H1 (cell line): ENCODE measurements at regions of chr12 and their contacts with region 1.

Region 1: DNA sequence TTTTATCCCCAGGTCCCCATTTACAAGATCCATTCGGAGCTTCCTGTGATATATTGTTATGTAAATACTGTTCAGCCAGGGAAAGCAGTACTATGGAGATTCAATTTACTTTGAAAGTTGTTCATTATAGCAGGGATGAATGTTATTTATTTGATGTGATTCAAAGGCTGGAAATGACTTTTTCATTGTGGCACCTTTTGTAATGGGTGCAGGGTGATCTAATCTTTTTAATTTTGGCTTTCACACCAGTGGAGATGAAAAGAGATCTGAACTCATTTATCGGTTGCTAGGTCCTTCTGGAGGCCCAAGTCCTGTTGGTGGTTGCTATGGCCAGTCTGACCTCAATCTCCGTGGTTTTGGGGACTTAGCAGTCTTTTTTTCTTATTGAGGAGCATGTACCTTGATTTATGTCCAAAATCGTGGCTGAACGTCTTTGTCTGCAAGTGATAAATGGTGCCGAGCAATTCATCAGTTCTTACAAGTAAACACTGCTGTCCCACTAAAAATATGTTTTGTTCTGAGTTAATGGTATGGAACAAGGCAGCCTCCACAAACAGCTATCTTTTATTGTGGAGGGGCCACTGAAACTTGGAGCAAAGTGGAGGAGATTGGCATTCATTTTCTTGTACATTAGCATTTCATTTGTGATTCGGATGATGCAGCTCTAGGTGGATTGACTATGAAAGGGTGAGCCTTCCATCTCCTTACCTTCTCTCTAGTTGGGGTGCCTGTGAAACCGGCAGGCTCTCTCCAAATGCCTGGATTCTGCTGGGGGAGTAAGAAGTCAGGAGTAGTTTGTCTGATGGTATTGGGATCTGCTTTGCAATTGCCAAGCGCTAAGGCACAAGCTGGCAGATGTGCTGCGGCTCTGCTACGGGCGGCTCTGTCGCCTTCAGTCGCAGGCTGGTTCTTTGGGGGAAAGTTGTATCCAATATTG is 2.0 kb downstream of the RMST start:
- DNase-seq: peak; percentile 68 to 71
- H3K4me3 ChIP-seq: peak overlapping the region; percentile 48 to 94 (median 73)
- H3K27ac ChIP-seq: peak overlapping the region; percentile 83; the same call in 1 of the 2 replicates
- H3K4me1 ChIP-seq: peaks cover 0 to 12% (median 8%) of the 10 kb centered on the region in 4 experiments; a peak in 6 of 7 replicates
- H3K27me3 ChIP-seq: peaks cover 0 to 4% (median 0%) of the 10 kb centered on the region in 4 experiments; a peak in 1 of 7 replicates
- CTCF ChIP-seq: no peak
- EP300 ChIP-seq: 0 out of 3 replicates have a peak, but pooled peaks of 1 of the 2 experiments have one; percentile 44
- POLR2A ChIP-seq: peak; percentile 82 to 98
- RAD21 ChIP-seq: peak; percentile 8 to 28; a peak in 1 of 4 replicates

Region 2: DNA sequence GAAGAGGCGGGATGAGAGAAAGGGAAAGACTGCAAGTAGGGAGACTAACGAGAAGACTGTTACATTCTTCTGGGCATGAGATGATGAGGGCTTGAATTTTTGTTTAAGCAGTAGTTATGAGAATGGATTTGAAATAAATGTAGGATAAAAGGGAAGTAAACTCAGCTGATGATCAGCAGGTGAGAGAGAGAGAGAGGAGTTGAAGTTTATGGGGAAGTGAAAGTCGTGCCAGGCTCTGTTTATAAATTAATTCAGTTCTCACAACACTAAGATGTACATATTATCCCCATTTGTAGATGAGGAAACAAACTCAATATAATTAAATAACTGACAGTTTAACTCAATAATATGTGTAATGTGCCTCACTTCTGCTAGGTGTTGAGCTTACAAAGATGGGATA is 172.1 kb before region 1 on chr12:
- CTCF ChIA-PET with region 1: no interaction called
- POLR2A ChIA-PET with region 1: no interaction called
- DNase-seq: no peak
- H3K4me3 ChIP-seq: no peak overlapping the region
- H3K27ac ChIP-seq: no peak overlapping the region
- H3K4me1 ChIP-seq: peaks cover 0 to 2% (median 0%) of the 10 kb centered on the region in 4 experiments; a peak in 2 of 7 replicates
- H3K27me3 ChIP-seq: no peaks in the 10 kb centered on the region
- CTCF ChIP-seq: no peak
- EP300 ChIP-seq: no peak
- POLR2A ChIP-seq: no peak
- RAD21 ChIP-seq: no peak

Region 3: DNA sequence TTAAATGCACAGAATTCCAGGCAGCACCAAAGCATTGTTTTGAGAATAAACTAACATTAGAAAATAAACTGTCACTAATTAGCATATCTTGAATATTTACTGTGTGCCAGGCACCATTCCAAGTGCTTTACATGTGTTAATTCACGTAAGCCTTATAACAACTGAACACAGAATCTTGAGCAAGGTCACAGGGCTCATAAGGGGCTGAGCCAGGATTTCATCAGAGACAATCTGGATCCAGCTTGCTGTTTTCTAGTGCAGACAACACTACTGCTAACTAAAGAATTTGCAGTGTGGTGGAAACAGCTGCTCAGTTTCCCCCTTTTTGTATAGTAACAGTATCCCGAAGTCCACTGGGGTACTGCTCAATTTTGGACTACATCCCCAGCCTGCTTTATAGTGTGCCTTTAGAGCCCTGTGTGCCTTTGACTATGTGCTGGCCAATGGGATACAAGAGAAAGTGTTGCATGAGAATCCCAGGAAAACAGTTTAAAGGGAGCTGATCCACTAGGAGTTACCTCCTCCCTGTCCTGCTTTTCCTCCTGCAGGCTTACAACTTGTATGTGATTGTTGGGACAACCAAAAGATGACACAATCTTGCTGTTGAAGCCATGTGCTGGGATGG is 38.0 kb before region 1 on chr12:
- CTCF ChIA-PET with region 1: interaction called, 5 read pairs
- POLR2A ChIA-PET with region 1: interaction called, 11 read pairs
- DNase-seq: peak in 1 of 2 experiments; percentile 47
- H3K4me3 ChIP-seq: no peak overlapping the region
- H3K27ac ChIP-seq: peak overlapping the region; percentile 20; the same call in 1 of the 2 replicates
- H3K4me1 ChIP-seq: peaks cover 9 to 24% (median 17%) of the 10 kb centered on the region in 4 experiments
- H3K27me3 ChIP-seq: no peaks in the 10 kb centered on the region
- CTCF ChIP-seq: no peak
- EP300 ChIP-seq: no peak
- POLR2A ChIP-seq: no peak
- RAD21 ChIP-seq: no peak

Region 4: GRCh38 chr12:97452230-97452629 is 12.4 kb before region 1 on chr12:
- CTCF ChIA-PET with region 1: interaction called, 4 read pairs
- POLR2A ChIA-PET with region 1: interaction called, 19 read pairs
- DNase-seq: no peak
- H3K4me3 ChIP-seq: no peak overlapping the region
- H3K27ac ChIP-seq: no peak overlapping the region
- H3K4me1 ChIP-seq: no peaks in the 10 kb centered on the region
- H3K27me3 ChIP-seq: no peaks in the 10 kb centered on the region
- CTCF ChIP-seq: no peak
- EP300 ChIP-seq: no peak
- POLR2A ChIP-seq: no peak
- RAD21 ChIP-seq: no peak

Region 5: GRCh38 chr12:97487462-97487861 is 22.8 kb after region 1 on chr12:
- CTCF ChIA-PET with region 1: interaction called, 6 read pairs
- POLR2A ChIA-PET with region 1: interaction called, 14 read pairs
- DNase-seq: no peak
- H3K4me3 ChIP-seq: no peak overlapping the region
- H3K27ac ChIP-seq: no peak overlapping the region; the same call in 1 of the 2 replicates
- H3K4me1 ChIP-seq: peaks cover 0 to 2% (median 0%) of the 10 kb centered on the region in 4 experiments; a peak in 2 of 7 replicates
- H3K27me3 ChIP-seq: no peaks in the 10 kb centered on the region
- CTCF ChIP-seq: no peak
- EP300 ChIP-seq: no peak
- POLR2A ChIP-seq: no peak
- RAD21 ChIP-seq: no peak

Region 6: DNA sequence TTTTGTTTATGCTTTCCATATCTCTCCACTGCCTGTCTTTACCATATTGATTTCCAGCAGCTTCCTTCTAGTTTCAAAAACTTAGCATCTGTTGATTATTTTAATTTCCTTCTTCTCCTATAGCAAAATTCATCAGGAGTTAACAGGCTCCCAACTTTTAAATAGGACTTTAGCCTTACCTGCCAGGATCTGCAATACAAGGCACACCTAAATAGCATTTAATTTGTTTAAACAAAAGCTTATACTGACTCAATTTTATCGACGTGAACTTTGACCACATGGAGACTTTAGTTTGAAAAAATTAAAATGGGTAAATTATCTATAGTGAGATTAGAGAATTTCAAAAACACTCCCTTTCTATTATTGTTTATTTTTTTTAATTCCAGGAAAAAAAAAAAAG is 38.4 kb after region 1 on chr12:
- CTCF ChIA-PET with region 1: no interaction called
- POLR2A ChIA-PET with region 1: no interaction called
- DNase-seq: no peak
- H3K4me3 ChIP-seq: no peak overlapping the region
- H3K27ac ChIP-seq: no peak overlapping the region
- H3K4me1 ChIP-seq: no peaks in the 10 kb centered on the region
- H3K27me3 ChIP-seq: no peaks in the 10 kb centered on the region
- CTCF ChIP-seq: no peak
- EP300 ChIP-seq: no peak
- POLR2A ChIP-seq: no peak
- RAD21 ChIP-seq: no peak

Region 7: DNA sequence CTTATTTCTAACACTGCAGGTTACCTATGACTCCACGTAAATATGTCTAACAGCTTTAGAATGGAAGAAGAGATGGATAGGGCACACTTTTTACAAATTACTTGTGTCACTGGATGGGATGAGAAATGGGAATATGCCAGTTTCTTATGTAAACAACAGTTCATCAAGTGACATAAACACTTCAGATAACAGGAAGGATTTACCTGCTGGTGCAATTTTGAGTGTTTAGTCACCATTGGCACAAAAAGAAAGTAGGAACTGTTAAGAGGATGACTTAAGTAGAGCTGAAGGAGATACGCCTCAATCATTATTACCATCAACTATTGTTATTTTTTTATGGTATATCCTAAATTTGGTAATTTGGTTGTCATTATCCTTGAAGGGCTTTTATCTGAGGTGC is 81.1 kb after region 1 on chr12:
- CTCF ChIA-PET with region 1: no interaction called
- POLR2A ChIA-PET with region 1: no interaction called
- DNase-seq: no peak
- H3K4me3 ChIP-seq: no peak overlapping the region
- H3K27ac ChIP-seq: no peak overlapping the region
- H3K4me1 ChIP-seq: peaks cover 0 to 3% (median under 1%) of the 10 kb centered on the region in 4 experiments; a peak in 2 of 7 replicates
- H3K27me3 ChIP-seq: no peaks in the 10 kb centered on the region
- CTCF ChIP-seq: no peak
- EP300 ChIP-seq: no peak
- POLR2A ChIP-seq: no peak
- RAD21 ChIP-seq: no peak